HepG2 (cell line): ENCODE measurements at regions of chr9 and their contacts with region 1.

Region 1: GRCh38 chr9:112486221-112487007 is at the start of gene KIAA1958:
- DNase-seq: peak; percentile 81
- ATAC-seq: peak; percentile 90
- H3K4me3 ChIP-seq: peak within 1 kb of the TSS; percentile 88 to 95 (median 93)
- H3K27ac ChIP-seq: peak within 1 kb of the TSS; percentile 86
- H3K4me1 ChIP-seq: peaks cover 45% of the 10 kb centered on the region
- H3K27me3 ChIP-seq: no peaks in the 10 kb centered on the region; a peak in 1 of 5 replicates
- CTCF ChIP-seq: peak; percentile 36
- EP300 ChIP-seq: no peak
- POLR2A ChIP-seq: peak; percentile 92 to 99
- RAD21 ChIP-seq: peak; percentile 42
- total RNA-seq, gene KIAA1958: 8.5 and 11.4 TPM in 2 replicates

Region 2: DNA sequence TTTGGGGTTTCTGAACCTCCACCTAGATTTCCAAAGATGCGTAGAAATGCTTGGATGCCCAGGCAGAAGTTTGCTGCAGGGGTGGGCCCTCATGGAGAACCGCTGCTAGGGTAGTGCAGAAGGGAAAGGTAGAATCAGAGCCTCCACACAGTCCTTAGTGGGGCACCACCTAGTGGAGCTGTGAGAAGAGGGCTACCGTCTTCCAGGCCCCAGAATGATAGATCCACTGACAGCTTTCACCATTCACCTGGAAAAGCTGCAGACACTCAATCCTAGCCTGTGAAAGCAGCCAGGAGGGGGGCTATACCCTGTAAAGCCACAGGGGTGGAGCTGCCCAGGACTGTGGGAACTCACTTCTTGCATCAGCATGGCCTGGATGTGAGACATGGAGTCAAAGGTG is 119.8 kb before region 1 on chr9:
- CTCF ChIA-PET with region 1: no interaction called
- POLR2A ChIA-PET with region 1: no interaction called
- in situ Hi-C with region 1: no loop called
- intact Hi-C with region 1: no loop called
- DNase-seq: peak; percentile 39
- ATAC-seq: peak; percentile 79
- H3K4me3 ChIP-seq: no peak overlapping the region
- H3K27ac ChIP-seq: no peak overlapping the region
- H3K4me1 ChIP-seq: peaks cover 10% of the 10 kb centered on the region
- H3K27me3 ChIP-seq: no peaks in the 10 kb centered on the region
- CTCF ChIP-seq: peak; percentile 69
- EP300 ChIP-seq: no peak
- POLR2A ChIP-seq: no peak
- RAD21 ChIP-seq: peak; percentile 50

Region 3: DNA sequence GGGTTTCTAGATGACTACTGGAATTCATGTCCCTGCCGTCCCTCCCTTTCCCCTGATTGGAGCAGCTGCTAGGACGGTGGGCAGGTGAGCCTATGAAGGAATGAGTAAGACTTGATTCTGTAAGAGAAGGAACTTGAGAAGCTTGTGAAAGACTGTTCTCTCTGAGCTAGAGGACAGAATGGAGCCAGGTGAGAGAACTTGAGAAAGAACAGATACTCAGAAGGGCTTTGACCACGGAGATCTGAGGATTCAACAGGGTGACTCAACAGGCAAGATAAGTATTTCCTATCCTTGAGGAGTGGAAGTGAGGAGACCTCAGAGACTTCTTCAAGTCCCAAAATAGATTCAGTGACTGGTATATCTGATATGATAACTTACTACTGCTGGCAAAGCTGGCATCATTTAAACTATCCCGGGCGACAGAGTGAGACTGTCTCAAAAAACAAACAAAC is 64.6 kb before region 1 on chr9:
- CTCF ChIA-PET with region 1: no interaction called
- POLR2A ChIA-PET with region 1: no interaction called
- in situ Hi-C with region 1: no loop called
- intact Hi-C with region 1: no loop called
- DNase-seq: no peak
- ATAC-seq: no peak
- H3K4me3 ChIP-seq: no peak overlapping the region
- H3K27ac ChIP-seq: no peak overlapping the region
- H3K4me1 ChIP-seq: no peaks in the 10 kb centered on the region
- H3K27me3 ChIP-seq: no peaks in the 10 kb centered on the region
- CTCF ChIP-seq: no peak
- EP300 ChIP-seq: no peak
- POLR2A ChIP-seq: no peak
- RAD21 ChIP-seq: no peak

Region 4: DNA sequence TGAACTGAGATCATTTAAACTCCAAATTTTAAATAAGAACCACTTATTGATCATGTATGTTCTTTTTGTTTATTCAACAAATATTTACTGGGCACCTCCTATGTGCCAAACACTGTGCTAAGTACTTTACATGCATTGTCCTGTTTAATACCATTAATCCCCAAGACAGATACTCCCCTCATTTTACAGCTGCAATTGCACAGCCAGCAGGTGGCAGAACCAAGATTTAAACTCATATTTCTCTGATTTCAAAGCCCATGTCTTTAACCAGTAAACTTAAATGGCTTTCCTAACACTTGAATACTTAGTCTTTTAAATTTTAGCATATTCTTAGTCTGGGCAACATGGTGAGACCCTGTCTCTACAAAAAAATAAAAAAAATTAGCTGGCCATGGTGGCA is 43.2 kb before region 1 on chr9:
- CTCF ChIA-PET with region 1: no interaction called
- POLR2A ChIA-PET with region 1: no interaction called
- in situ Hi-C with region 1: no loop called
- intact Hi-C with region 1: no loop called
- DNase-seq: peak; percentile 16
- ATAC-seq: peak; percentile 42; the same call in 1 of the 3 replicates
- H3K4me3 ChIP-seq: no peak overlapping the region
- H3K27ac ChIP-seq: no peak overlapping the region
- H3K4me1 ChIP-seq: peaks cover 10% of the 10 kb centered on the region; the same call in 1 of the 2 replicates
- H3K27me3 ChIP-seq: no peaks in the 10 kb centered on the region
- CTCF ChIP-seq: peak; percentile 41
- EP300 ChIP-seq: no peak
- POLR2A ChIP-seq: no peak
- RAD21 ChIP-seq: no peak

Region 5: GRCh38 chr9:112531666-112532282 is 45.4 kb after region 1 on chr9:
- CTCF ChIA-PET with region 1: no interaction called
- POLR2A ChIA-PET with region 1: no interaction called
- in situ Hi-C with region 1: no loop called
- intact Hi-C with region 1: no loop called
- DNase-seq: peak; percentile 13
- ATAC-seq: no peak
- H3K4me3 ChIP-seq: no peak overlapping the region
- H3K27ac ChIP-seq: no peak overlapping the region
- H3K4me1 ChIP-seq: peaks cover 14% of the 10 kb centered on the region
- H3K27me3 ChIP-seq: no peaks in the 10 kb centered on the region
- CTCF ChIP-seq: no peak
- EP300 ChIP-seq: no peak
- POLR2A ChIP-seq: no peak
- RAD21 ChIP-seq: no peak

Region 6: GRCh38 chr9:112570671-112571167 is 84.3 kb after region 1 on chr9:
- CTCF ChIA-PET with region 1: no interaction called
- POLR2A ChIA-PET with region 1: interaction called, 6 read pairs
- in situ Hi-C with region 1: no loop called
- intact Hi-C with region 1: loop called (anchors 2 kb)
- DNase-seq: peak; percentile 89
- ATAC-seq: peak; percentile 99
- H3K4me3 ChIP-seq: no peak overlapping the region; a peak in 1 of 6 replicates
- H3K27ac ChIP-seq: peak overlapping the region; percentile 26
- H3K4me1 ChIP-seq: peaks cover 38% of the 10 kb centered on the region
- H3K27me3 ChIP-seq: no peaks in the 10 kb centered on the region
- CTCF ChIP-seq: no peak
- EP300 ChIP-seq: peak in 1 of 2 experiments; percentile 71; a peak in 1 of 4 replicates
- POLR2A ChIP-seq: no peak
- RAD21 ChIP-seq: peak; percentile 51; the same call in 1 of the 2 replicates

Region 7: DNA sequence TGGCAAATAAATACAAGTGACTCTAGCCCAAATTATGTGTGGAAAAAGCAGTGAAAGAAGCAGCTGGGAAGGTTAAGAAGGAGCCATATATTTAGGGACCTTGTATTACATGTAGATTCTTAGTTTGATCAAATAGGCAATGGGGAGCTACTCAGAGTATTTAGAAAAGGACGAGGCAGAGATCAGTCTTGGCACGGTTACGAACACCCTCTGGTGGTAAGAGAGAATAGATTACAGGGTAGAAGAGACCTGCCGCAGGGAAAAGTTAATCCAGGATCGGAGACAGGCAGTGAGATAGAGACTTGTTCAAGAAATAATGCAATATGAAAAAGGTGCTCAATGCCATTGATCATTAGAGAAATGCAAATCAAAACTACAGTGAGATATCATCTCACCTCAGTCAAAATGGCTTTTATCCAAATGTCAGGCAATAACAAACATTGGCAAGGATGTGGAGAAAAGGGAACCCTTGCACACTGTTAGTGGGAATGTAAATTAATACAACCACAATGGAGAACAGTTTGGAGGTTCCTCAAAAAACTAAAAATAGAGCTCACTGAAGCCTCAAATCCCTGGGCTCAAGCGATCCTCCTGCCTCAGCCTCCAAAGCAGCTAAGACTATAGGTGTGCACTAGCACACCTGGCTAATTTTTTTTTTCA is 219.5 kb after region 1 on chr9:
- CTCF ChIA-PET with region 1: no interaction called
- POLR2A ChIA-PET with region 1: no interaction called
- in situ Hi-C with region 1: loop called (anchors 25 kb)
- intact Hi-C with region 1: loop called (anchors 10 kb)
- DNase-seq: peak; percentile 40
- ATAC-seq: peak; percentile 80
- H3K4me3 ChIP-seq: no peak overlapping the region
- H3K27ac ChIP-seq: no peak overlapping the region
- H3K4me1 ChIP-seq: no peaks in the 10 kb centered on the region
- H3K27me3 ChIP-seq: no peaks in the 10 kb centered on the region
- CTCF ChIP-seq: peak; percentile 47; the same call in 1 of the 2 replicates
- EP300 ChIP-seq: no peak
- POLR2A ChIP-seq: no peak
- RAD21 ChIP-seq: no peak